Pancreas (tissue), 10 donors: ENCODE measurements at regions of chr1 and their contacts with region 1.

Region 1: GRCh38 chr1:112803906-112804762 is 89.0 kb upstream of the PPM1J start:
- DNase-seq: peak; percentile 65 to 93 (median 82)
- ATAC-seq: peak; percentile 92 to 99 (median 94)
- H3K4me3 ChIP-seq: no peak overlapping the region
- H3K27ac ChIP-seq: no peak overlapping the region
- H3K4me1 ChIP-seq: peaks cover 0 to 9% (median 0%) of the 10 kb centered on the region in 3 donors
- H3K27me3 ChIP-seq: no peaks in the 10 kb centered on the region
- CTCF ChIP-seq: peak; percentile 54 to 75 (median 68)

Region 2: GRCh38 chr1:112337028-112337531 is 467.1 kb before region 1 on chr1:
- intact Hi-C with region 1: no loop called
- DNase-seq: peak; percentile 17 to 62 (median 44)
- ATAC-seq: peak; percentile 86 to 95 (median 92)
- H3K4me3 ChIP-seq: peak overlapping the region in 1 of 4 donors; percentile 17
- H3K27ac ChIP-seq: no peak overlapping the region
- H3K4me1 ChIP-seq: no peaks in the 10 kb centered on the region
- H3K27me3 ChIP-seq: no peaks in the 10 kb centered on the region
- CTCF ChIP-seq: peak; percentile 15 to 53 (median 42)

Region 3: GRCh38 chr1:112715264-112716053 is 88.7 kb before region 1 on chr1 and contains the start of gene PPM1J:
- intact Hi-C with region 1: loop called (anchors 2 to 5 kb)
- DNase-seq: peak; percentile 99 to 100 (median 99)
- ATAC-seq: peak; percentile 85 to 92 (median 87)
- H3K4me3 ChIP-seq: peak within 1 kb of the TSS; percentile 26 to 83 (median 56)
- H3K27ac ChIP-seq: peak within 1 kb of the TSS in 3 of 4 donors; percentile 13 to 73 (median 58)
- H3K4me1 ChIP-seq: peaks cover 0 to 9% (median 5%) of the 10 kb centered on the region in 3 donors
- H3K27me3 ChIP-seq: no peaks in the 10 kb centered on the region
- CTCF ChIP-seq: no peak
- total RNA-seq, gene PPM1J: 0.20 to 1.6 (median 0.87) TPM

Region 4: DNA sequence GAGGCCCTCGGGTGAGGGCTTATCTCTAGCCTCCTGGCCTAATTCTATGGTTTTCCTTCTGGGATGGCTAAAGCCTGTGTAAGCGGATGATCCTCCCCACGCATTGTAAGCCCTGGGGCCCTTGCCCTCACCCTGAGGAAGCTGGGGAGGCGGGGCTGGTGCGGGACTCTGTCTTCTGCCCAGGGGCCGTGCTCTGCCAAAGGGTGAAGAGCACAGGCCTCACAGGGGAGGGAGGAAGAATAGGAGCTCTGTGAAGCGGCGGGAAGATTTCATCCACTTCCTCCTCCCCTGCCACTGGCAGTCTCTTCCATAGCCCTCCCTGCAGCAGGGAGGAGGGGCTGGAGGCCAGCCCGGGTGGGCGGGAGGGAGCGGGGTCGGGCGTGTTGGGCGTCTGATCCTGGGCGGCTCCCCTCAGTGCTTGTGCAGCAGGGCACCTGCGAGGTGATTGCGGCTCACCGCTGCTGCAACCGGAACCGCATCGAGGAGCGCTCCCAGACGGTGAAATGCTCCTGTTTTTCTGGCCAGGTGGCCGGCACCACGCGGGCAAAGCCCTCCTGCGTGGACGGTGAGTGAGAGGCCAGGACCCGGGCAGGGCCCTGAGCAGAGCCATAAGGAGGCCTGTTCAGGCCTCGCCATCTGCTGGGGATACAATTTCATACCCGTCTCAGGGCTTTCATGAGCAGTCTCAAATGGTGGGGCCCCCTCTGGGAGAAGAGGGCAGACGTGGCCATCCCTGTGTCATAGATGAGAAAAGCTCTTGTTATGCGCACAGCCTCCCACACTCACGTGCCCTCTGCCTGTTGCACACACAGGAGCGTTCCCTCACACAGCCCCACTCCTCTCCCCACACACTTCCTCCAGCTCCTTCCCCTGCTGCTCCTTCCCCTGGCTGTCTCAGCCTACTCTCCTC is 81.3 kb before region 1 on chr1:
- intact Hi-C with region 1: loop called (anchors 2 to 5 kb)
- DNase-seq: no peak
- ATAC-seq: peak in 3 of 4 donors; percentile 28 to 58 (median 50)
- H3K4me3 ChIP-seq: no peak overlapping the region
- H3K27ac ChIP-seq: no peak overlapping the region
- H3K4me1 ChIP-seq: peaks cover 0 to 3% (median 0%) of the 10 kb centered on the region in 3 donors
- H3K27me3 ChIP-seq: no peaks in the 10 kb centered on the region
- CTCF ChIP-seq: no peak